A673 (cell line): ENCODE measurements at regions of chr19 and their contacts with region 1.

Region 1: GRCh38 chr19:51393959-51394836 is 3.8 kb upstream of the C19orf84 start:
- DNase-seq: peak; percentile 99
- H3K4me3 ChIP-seq: peak overlapping the region; percentile 65
- H3K27ac ChIP-seq: peak overlapping the region; percentile 77
- H3K4me1 ChIP-seq: peaks cover 10% of the 10 kb centered on the region
- H3K27me3 ChIP-seq: no peaks in the 10 kb centered on the region
- CTCF ChIP-seq: 0 out of 2 replicates have a peak, but pooled peaks have one; percentile 11

Region 2: DNA sequence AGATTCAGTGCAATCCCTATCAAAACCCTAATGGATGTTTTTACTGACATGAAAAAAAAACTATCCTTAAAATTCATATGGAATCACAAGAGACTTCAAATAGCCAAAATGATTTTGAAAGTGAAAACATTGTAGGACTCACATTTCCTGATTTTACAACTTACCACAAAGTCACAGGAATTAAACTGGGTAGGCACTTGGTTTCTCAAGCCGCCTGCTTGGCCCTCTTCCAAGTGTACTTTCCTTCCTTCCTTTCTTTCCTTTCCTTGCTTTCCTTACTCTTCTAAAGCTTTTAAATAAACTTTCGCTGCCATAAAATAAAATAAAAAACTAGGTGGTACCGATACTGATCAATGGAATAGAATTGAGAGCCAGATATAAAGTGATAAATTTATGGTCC is 190.3 kb before region 1 on chr19:
- CTCF ChIA-PET with region 1: interaction called, 16 read pairs
- POLR2A ChIA-PET with region 1: no interaction called
- intact Hi-C with region 1: no loop called
- DNase-seq: no peak
- H3K4me3 ChIP-seq: no peak overlapping the region
- H3K27ac ChIP-seq: no peak overlapping the region
- H3K4me1 ChIP-seq: no peaks in the 10 kb centered on the region
- H3K27me3 ChIP-seq: no peaks in the 10 kb centered on the region
- CTCF ChIP-seq: no peak

Region 3: DNA sequence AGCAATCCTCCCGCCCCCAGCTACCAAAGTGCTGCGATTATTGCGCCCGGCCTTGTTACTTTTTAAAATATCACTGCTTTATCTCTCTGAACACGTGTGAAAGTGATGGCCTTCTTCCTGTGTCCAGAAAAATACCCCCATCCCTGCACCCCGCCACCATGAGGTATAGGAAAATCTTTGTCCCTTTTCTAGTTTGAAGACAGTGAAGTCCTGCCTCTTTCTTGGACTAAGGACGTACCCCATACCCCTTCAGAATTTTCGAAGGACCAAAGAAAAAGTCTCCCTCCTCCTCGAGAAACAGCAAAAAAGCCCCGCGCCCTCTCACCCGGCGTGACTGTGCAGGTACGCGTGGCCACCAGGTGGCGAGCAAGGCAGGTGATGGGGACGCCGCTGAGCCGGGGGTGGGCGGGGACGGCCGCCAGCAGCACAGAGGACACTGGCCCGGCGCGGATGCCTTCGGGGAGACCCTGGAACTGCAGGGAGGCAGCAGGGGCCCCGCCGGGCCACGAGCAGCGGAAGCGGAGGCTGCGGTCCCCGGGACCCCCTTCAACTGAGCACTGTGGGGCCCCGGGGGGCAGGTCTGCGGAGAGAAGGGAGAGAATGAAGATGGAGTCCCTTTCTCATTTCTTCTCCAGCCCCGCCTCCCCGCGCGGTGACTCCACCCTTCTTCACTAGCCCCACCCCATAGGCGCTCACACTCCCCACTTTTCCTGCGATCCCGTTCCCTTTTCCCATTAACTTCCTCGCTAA is 55.5 kb before region 1 on chr19:
- CTCF ChIA-PET with region 1: interaction called, 3 read pairs
- POLR2A ChIA-PET with region 1: no interaction called
- intact Hi-C with region 1: loop called (anchors 5 kb)
- DNase-seq: peak; percentile 86
- H3K4me3 ChIP-seq: peak overlapping the region; percentile 61
- H3K27ac ChIP-seq: peak overlapping the region; percentile 24
- H3K4me1 ChIP-seq: peaks cover 8% of the 10 kb centered on the region
- H3K27me3 ChIP-seq: no peaks in the 10 kb centered on the region
- CTCF ChIP-seq: peak; percentile 89

Region 4: DNA sequence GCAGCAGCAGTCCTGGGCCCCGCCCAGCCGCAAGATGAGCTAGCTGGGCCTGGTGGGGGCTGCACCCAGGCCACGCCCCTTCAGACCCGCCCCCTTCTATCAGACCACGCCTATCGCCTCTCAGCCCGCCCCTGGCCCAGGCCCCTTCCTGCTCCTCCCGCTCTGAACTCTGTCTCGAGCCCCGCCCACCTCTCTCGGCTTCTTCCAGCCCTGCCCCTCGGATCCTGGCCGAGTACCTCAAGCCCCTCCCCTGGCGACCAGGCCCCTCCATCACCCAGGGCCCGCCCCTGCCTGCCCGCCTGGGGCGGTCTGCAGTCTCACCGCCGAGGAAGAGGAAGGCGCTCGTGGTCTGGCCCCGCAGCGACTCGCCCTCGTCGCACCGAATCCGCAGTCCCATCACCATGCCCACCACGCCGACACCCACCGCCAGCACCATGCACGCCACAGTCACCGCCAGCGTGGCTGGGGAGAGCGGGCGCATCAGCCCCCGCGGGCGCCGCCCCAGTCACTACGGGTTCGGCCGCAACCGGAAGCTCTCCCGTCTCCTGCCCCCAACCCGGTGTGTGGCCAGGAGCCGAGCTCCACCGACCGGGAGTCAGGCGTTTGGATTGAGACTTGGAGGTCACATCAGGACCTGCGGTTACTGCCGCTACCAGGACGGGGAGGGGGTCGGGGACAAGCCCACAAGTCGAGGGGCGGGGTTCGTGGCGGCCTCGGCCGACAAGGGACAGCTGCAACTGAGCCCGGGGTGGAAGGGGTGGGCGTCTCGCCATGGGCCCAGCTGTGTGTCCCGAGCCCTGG is 26.4 kb before region 1 on chr19:
- CTCF ChIA-PET with region 1: no interaction called
- POLR2A ChIA-PET with region 1: no interaction called
- intact Hi-C with region 1: loop called (anchors 2 kb)
- DNase-seq: peak; percentile 98
- H3K4me3 ChIP-seq: peak overlapping the region; percentile 64
- H3K27ac ChIP-seq: peak overlapping the region; percentile 76
- H3K4me1 ChIP-seq: peaks cover 9% of the 10 kb centered on the region
- H3K27me3 ChIP-seq: no peaks in the 10 kb centered on the region
- CTCF ChIP-seq: no peak